CD4-positive, alpha-beta memory T cell (primary cell): ENCODE measurements at regions of chr6 and their contacts with region 1.

Region 1: DNA sequence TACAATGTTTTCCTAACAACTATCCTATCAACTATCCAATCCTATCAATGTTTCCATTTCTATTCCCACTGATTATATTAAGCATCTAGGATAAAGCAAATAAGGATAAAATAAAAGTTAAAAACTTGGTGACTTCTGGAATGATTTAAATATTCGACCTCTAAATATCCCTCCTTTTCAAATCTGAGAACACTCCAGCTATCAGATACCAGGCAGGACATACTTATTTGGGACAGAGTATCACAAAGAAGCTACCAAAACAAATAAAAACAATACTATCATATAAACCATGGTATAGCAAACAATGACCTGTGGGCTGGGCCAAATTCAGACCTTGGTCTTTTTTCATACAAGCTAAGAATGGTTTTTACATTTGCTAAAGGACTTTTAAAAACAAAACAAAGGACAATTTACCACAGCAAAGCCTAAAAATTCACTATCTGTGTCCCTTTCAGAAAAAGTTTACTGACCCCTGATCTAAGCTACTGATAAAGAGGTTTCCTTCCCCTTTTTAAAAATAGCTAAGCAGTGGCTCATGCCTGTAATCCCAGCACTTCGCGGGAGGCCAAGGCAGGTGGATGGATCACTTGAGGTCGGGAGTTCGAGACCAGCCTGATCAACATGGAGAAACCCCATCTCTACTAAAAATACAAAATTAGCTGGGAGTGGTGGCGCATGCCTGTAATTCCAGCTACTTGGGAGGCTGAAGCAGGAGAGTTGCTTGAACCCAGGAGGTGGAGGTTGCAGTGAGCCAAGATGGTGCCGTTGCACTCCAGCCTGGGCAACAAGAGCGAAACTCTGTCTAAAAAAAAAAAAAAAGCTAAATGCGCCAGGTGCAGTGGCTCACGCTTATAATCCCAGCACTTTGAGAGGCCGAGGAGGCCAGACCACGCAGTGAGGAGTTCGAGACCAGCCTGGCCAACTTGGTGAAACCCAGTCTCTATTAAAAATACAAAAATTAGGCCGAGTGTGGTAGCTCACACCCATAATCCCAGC is 6.0 kb downstream of the NUP153 start:
- DNase-seq: no peak
- H3K4me3 ChIP-seq: no peak overlapping the region
- H3K4me3 Mint-ChIP-seq: peak overlapping the region in 4 of 8 donors; percentile 13 to 43 (median 23)
- H3K27ac ChIP-seq: peak overlapping the region; percentile 14
- H3K27ac Mint-ChIP-seq: peak overlapping the region in 6 of 7 donors; percentile 53 to 93 (median 78)
- H3K4me1 ChIP-seq: peaks cover 60% of the 10 kb centered on the region
- H3K4me1 Mint-ChIP-seq: peaks cover 30 to 77% (median 54%) of the 10 kb centered on the region in 4 donors
- H3K27me3 ChIP-seq: no peaks in the 10 kb centered on the region
- H3K27me3 Mint-ChIP-seq: no peaks in the 10 kb centered on the region

Region 2: DNA sequence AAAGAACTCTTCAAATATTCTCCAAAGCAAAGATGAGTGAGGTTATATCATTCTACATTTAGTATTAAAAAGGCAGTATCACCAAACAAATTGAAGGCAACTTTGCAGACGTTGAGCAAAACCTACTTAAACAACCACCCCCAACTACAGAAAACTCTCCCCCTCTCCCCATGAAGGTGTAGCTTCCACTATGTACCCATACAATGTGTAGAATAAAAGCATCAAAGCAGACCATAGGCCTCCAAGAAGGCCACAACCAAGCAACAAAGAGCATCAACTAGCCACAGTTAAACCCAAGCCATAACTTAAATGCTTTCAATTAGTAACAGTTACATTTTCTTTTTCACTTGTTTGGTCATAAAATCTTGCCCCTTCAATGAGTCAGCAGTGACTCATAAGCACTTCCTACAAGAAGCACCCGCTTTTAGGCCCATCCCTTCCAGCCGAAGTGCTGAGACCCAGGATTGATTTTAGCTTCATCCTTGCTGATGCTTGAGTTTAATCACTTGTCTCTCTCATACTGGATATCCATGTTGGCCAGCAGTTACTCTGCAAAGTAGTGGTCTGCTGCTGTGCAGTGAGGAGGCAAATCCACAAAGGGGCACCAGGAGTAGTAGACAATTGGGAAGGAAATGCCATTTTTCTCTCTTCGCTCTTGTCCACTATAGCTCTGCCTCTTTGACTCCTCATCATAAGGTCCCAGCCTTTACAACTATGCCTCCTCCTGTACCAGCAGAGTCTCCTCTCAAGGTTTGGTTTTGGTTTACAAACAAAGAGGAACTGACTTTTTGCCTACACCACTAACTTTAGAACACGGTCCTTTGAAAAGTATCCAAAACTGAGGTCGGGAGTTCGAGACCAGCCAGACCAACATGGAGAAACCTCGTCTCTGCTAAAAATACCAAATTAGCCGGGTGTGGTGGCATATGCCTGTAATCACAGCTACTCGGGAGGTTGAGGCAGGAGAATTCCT is 14.4 kb after region 1 on chr6:
- CTCF ChIA-PET with region 1: interaction called, 20 read pairs
- POLR2A ChIA-PET with region 1: interaction called, 7 read pairs
- intact Hi-C with region 1: no loop called
- DNase-seq: no peak
- H3K4me3 ChIP-seq: no peak overlapping the region
- H3K4me3 Mint-ChIP-seq: no peak overlapping the region
- H3K27ac ChIP-seq: no peak overlapping the region
- H3K27ac Mint-ChIP-seq: peak overlapping the region in 6 of 7 donors; percentile 2 to 65 (median 42)
- H3K4me1 ChIP-seq: peaks cover 3% of the 10 kb centered on the region
- H3K4me1 Mint-ChIP-seq: peaks cover 5 to 7% (median 6%) of the 10 kb centered on the region in 4 donors
- H3K27me3 ChIP-seq: no peaks in the 10 kb centered on the region
- H3K27me3 Mint-ChIP-seq: no peaks in the 10 kb centered on the region

Region 3: GRCh38 chr6:17808609-17809008 is 107.9 kb after region 1 on chr6:
- CTCF ChIA-PET with region 1: interaction called, 68 read pairs
- POLR2A ChIA-PET with region 1: interaction called, 3 read pairs
- intact Hi-C with region 1: loop called (anchors 1 kb)
- DNase-seq: no peak
- H3K4me3 ChIP-seq: no peak overlapping the region
- H3K4me3 Mint-ChIP-seq: peak overlapping the region in 1 of 8 donors; percentile 11
- H3K27ac ChIP-seq: no peak overlapping the region
- H3K27ac Mint-ChIP-seq: no peak overlapping the region
- H3K4me1 ChIP-seq: no peaks in the 10 kb centered on the region
- H3K4me1 Mint-ChIP-seq: peaks cover 0 to 3% (median 0%) of the 10 kb centered on the region in 4 donors
- H3K27me3 ChIP-seq: no peaks in the 10 kb centered on the region
- H3K27me3 Mint-ChIP-seq: peaks cover 11 to 20% of the 10 kb centered on the region in 2 donors

Region 4: DNA sequence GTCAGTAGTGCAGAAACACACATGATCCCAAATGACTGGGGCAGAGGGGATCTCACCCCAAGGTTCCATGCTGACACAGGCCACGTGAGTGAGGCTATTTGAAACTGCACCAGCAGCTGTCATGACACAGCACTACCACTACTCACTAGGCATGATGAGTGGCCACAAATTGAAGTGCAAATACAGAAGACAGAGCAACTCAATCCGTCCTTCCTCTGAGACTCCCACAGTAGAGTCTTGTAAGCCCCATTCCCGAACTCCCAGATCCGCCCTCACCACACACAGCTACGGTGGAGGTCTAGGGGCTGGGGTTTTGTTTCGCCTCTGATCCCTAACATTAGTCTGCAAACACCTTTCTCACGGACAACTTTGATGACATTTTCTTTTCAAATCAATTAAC is 119.3 kb after region 1 on chr6:
- CTCF ChIA-PET with region 1: interaction called, 17 read pairs
- POLR2A ChIA-PET with region 1: no interaction called
- intact Hi-C with region 1: loop called (anchors 5 kb)
- DNase-seq: no peak
- H3K4me3 ChIP-seq: no peak overlapping the region
- H3K4me3 Mint-ChIP-seq: no peak overlapping the region
- H3K27ac ChIP-seq: no peak overlapping the region
- H3K27ac Mint-ChIP-seq: no peak overlapping the region
- H3K4me1 ChIP-seq: no peaks in the 10 kb centered on the region
- H3K4me1 Mint-ChIP-seq: no peaks in the 10 kb centered on the region
- H3K27me3 ChIP-seq: no peaks in the 10 kb centered on the region
- H3K27me3 Mint-ChIP-seq: peaks cover 4 to 6% of the 10 kb centered on the region in 2 donors